IMR-90 (cell line): ENCODE measurements at regions of chr2 and their contacts with region 1.

Region 1: DNA sequence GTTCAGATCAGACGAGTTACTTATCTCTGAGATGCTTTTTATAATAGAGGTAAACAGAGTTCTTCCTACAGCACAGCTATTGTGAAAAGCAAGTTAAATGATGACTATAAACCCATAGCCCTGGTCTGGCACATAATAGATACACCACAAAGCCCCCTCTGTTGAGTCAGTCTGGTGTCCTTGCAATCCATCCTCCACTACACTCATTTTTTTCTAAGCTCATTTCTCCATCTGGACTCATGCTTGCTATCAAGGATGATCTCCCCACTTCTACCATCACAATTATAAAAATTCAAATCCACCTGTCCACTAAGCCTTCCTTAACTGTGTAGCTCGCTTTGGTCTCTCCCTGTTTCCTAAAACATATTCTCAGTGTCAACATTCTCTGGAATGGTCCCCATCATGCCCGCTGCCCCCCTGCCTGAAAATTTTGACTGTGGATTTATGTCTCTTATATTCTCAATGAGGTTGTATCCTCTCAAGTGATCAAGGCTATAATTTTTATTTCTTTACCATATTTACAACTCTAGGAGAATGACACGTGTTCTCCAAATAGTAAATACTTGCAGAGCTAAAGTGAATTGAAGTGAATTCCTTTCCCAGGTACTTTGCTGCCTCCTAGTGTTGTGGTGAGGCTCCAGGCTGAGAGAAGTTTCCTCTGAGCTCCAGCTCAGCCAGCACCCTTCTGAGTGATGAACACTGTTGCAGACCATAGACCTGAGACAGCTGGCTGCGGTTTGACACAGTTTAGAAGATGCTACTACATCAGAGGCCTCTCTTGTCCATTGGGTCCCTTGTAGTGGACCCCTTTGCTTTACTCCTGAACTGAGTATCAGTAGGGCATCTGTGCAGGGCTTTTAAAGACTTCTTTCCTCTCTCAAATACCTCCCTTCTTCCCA is 108.7 kb downstream of the DPP10 start:
- DNase-seq: peak; percentile 50
- ATAC-seq: peak; percentile 82
- H3K4me3 ChIP-seq: no peak overlapping the region
- H3K27ac ChIP-seq: no peak overlapping the region
- H3K4me1 ChIP-seq: no peaks in the 10 kb centered on the region
- H3K27me3 ChIP-seq: no peaks in the 10 kb centered on the region
- CTCF ChIP-seq: peak; percentile 70
- POLR2A ChIP-seq: no peak
- RAD21 ChIP-seq: peak; percentile 76

Region 2: GRCh38 chr2:113756355-113757137 is 794.6 kb before region 1 on chr2 and contains the start of gene SLC35F5:
- CTCF ChIA-PET with region 1: no interaction called
- POLR2A ChIA-PET with region 1: no interaction called
- dilution Hi-C with region 1: no loop called
- in situ Hi-C with region 1: no loop called
- intact Hi-C with region 1: loop called (anchors 10 kb)
- DNase-seq: peak; percentile 86
- ATAC-seq: peak; percentile 98
- H3K4me3 ChIP-seq: peak within 1 kb of the TSS; percentile 87
- H3K27ac ChIP-seq: peak within 1 kb of the TSS; percentile 99
- H3K4me1 ChIP-seq: 0 out of 2 replicates have a peak, but pooled peaks cover 2% of the 10 kb centered on the region
- H3K27me3 ChIP-seq: no peaks in the 10 kb centered on the region
- CTCF ChIP-seq: no peak
- POLR2A ChIP-seq: peak; percentile 89
- RAD21 ChIP-seq: no peak
- total RNA-seq, gene SLC35F5: 93.4 and 106 TPM in 2 replicates

Region 3: GRCh38 chr2:113977660-113978523 is 573.3 kb before region 1 on chr2:
- CTCF ChIA-PET with region 1: interaction called, 6 read pairs
- POLR2A ChIA-PET with region 1: no interaction called
- dilution Hi-C with region 1: no loop called
- in situ Hi-C with region 1: loop called (anchors 25 kb)
- intact Hi-C with region 1: loop called (anchors 5 kb)
- DNase-seq: peak; percentile 72
- ATAC-seq: peak; percentile 36
- H3K4me3 ChIP-seq: no peak overlapping the region
- H3K27ac ChIP-seq: no peak overlapping the region
- H3K4me1 ChIP-seq: peaks cover 10% of the 10 kb centered on the region
- H3K27me3 ChIP-seq: no peaks in the 10 kb centered on the region
- CTCF ChIP-seq: peak; percentile 48
- POLR2A ChIP-seq: no peak
- RAD21 ChIP-seq: peak; percentile 44

Region 4: DNA sequence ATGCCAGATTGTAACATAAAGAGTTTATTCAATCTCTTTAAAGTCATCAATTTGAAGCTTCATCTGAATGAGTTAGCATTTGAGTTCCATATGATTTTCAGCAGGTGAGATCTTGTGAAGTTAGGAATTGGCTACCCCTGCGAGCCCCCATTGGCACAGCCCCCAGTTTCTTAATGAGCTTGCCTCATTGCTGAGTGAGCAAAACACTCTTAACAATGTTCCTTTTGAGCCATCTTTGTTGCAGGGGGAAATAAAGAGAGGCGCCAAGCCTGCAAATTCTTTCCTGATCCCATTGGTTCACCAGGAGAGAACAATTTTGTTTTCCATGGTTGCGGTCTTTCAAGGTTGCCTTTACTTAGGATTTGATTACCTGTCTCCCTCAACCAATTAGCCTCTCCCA is 90.0 kb before region 1 on chr2:
- CTCF ChIA-PET with region 1: no interaction called
- POLR2A ChIA-PET with region 1: no interaction called
- dilution Hi-C with region 1: no loop called
- in situ Hi-C with region 1: no loop called
- intact Hi-C with region 1: no loop called
- DNase-seq: no peak
- ATAC-seq: no peak
- H3K4me3 ChIP-seq: no peak overlapping the region
- H3K27ac ChIP-seq: no peak overlapping the region
- H3K4me1 ChIP-seq: no peaks in the 10 kb centered on the region
- H3K27me3 ChIP-seq: no peaks in the 10 kb centered on the region
- CTCF ChIP-seq: no peak
- POLR2A ChIP-seq: no peak
- RAD21 ChIP-seq: no peak

Region 5: GRCh38 chr2:114614592-114614991 is 63.4 kb after region 1 on chr2:
- CTCF ChIA-PET with region 1: no interaction called
- POLR2A ChIA-PET with region 1: no interaction called
- dilution Hi-C with region 1: no loop called
- in situ Hi-C with region 1: no loop called
- intact Hi-C with region 1: no loop called
- DNase-seq: no peak
- ATAC-seq: no peak
- H3K4me3 ChIP-seq: no peak overlapping the region
- H3K27ac ChIP-seq: no peak overlapping the region
- H3K4me1 ChIP-seq: no peaks in the 10 kb centered on the region
- H3K27me3 ChIP-seq: no peaks in the 10 kb centered on the region
- CTCF ChIP-seq: no peak
- POLR2A ChIP-seq: no peak
- RAD21 ChIP-seq: no peak

Region 6: GRCh38 chr2:114651933-114652332 is 100.8 kb after region 1 on chr2:
- CTCF ChIA-PET with region 1: no interaction called
- POLR2A ChIA-PET with region 1: no interaction called
- dilution Hi-C with region 1: no loop called
- in situ Hi-C with region 1: no loop called
- intact Hi-C with region 1: no loop called
- DNase-seq: no peak
- ATAC-seq: no peak
- H3K4me3 ChIP-seq: no peak overlapping the region
- H3K27ac ChIP-seq: no peak overlapping the region
- H3K4me1 ChIP-seq: no peaks in the 10 kb centered on the region
- H3K27me3 ChIP-seq: no peaks in the 10 kb centered on the region
- CTCF ChIP-seq: no peak
- POLR2A ChIP-seq: no peak
- RAD21 ChIP-seq: no peak